ENCODE measurements at regions of chr5 and their contacts with region 1.

Region 1: DNA sequence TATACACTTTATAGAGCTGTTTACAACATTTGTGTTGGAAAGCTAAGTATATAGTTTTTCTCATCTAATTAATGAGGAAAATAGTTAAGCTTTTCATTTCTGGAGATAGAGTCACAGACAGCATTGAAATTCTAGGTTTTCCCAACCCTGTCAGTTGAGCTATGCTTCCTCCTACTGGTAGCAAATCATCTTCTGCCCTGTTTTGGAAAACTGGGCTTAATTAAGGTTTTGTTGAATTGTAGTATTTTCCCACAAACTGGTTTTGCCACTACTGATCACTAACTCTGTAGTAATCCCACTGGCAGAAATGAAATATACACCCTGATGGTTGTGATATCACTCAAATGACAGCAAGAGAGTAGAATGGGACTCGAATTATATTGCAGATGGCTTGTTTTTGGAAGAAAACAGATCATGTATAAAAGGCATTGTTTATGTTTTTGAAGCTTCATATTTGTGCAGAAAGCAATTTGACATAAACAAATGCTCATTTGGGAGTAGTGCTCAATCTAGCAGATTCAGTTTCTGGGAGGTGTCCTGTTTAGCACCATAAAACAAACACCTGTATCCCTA is 46.6 kb downstream of the CD180 start:
- DNase-seq: no peak
- ATAC-seq: no peak
- H3K4me3 ChIP-seq: no peak overlapping the region
- H3K27ac ChIP-seq: no peak overlapping the region
- H3K4me1 ChIP-seq: no peaks in the 10 kb centered on the region
- H3K27me3 ChIP-seq: peaks cover 15% of the 10 kb centered on the region
- CTCF ChIP-seq: peak; percentile 56; the same call in 1 of the 2 replicates

Region 2: GRCh38 chr5:66882592-66883227 is 267.3 kb before region 1 on chr5:
- CTCF ChIA-PET with region 1: no interaction called
- POLR2A ChIA-PET with region 1: no interaction called
- in situ Hi-C with region 1: no loop called
- intact Hi-C with region 1: loop called (anchors 10 kb)
- DNase-seq: no peak
- ATAC-seq: no peak
- H3K4me3 ChIP-seq: no peak overlapping the region
- H3K27ac ChIP-seq: no peak overlapping the region
- H3K4me1 ChIP-seq: no peaks in the 10 kb centered on the region
- H3K27me3 ChIP-seq: no peaks in the 10 kb centered on the region
- CTCF ChIP-seq: no peak

Region 3: GRCh38 chr5:66987949-66988838 is 161.8 kb before region 1 on chr5:
- CTCF ChIA-PET with region 1: interaction called, 3 read pairs
- POLR2A ChIA-PET with region 1: no interaction called
- in situ Hi-C with region 1: no loop called
- intact Hi-C with region 1: loop called (anchors 1 kb)
- DNase-seq: no peak
- ATAC-seq: 0 out of 2 replicates have a peak, but pooled peaks have one; percentile 62
- H3K4me3 ChIP-seq: no peak overlapping the region
- H3K27ac ChIP-seq: no peak overlapping the region
- H3K4me1 ChIP-seq: no peaks in the 10 kb centered on the region
- H3K27me3 ChIP-seq: no peaks in the 10 kb centered on the region
- CTCF ChIP-seq: peak; percentile 78; the same call in 1 of the 2 replicates